ENCODE measurements at regions of chr11 and their contacts with region 1.

Region 1: GRCh38 chr11:47233989-47234668 is 14.5 kb downstream of the ACP2 start:
- DNase-seq: peak; percentile 63 to 72 (median 70)
- H3K4me3 ChIP-seq: peak overlapping the region in 1 of 7 experiments; percentile 4
- H3K27ac ChIP-seq: no peak overlapping the region
- H3K4me1 ChIP-seq: peaks cover 0 to 15% (median 7%) of the 10 kb centered on the region in 4 experiments
- H3K27me3 ChIP-seq: no peaks in the 10 kb centered on the region

Region 2: DNA sequence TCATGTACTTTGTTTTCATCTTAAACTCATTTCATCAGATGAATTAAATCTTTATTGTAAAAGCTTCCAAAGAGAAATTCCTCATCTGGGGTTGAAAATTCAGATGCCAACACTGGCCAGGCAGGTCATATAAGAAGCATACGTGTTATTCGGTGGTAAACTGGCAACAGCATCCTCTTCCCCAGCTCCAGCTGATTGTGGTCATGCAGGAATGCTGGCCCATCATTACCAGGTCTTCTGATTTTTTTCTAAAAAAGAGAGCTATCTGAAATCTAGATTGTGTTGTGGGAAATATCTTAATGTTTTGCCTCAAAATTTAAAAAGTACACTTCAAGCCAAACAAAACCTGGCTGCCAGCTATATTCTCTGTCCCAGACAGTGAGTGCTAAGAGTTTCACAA is 111.0 kb before region 1 on chr11:
- CTCF ChIA-PET with region 1: no interaction called
- POLR2A ChIA-PET with region 1: no interaction called
- DNase-seq: no peak
- H3K4me3 ChIP-seq: no peak overlapping the region
- H3K27ac ChIP-seq: no peak overlapping the region
- H3K4me1 ChIP-seq: no peaks in the 10 kb centered on the region
- H3K27me3 ChIP-seq: no peaks in the 10 kb centered on the region

Region 3: DNA sequence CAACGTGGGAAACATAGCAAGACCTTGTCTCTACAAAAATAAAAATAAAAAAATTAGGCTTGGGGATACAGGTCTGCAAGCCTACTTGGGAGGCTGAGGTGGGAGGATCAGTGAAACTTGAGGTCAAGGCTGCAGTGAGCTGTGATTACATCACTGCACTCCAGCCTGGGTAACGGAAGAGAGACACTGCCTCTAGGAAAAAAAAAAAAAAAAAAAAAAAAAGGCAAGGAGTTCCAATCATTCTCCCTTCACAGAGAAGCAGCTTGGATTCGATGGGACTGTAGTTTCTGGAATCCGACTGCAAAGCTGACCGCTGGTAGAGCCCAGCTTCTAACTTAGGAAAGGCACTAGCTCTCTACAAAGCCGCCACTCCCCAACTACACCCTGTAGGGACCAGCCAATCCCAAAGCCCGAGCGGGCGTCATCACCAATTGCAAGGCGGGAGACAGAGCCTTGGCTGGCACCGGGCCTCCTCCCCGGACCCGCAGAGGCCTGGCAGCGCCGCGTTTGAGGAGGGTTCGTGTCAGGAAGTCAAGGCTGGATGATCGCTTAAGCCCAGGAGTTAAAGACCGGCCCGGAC is 20.1 kb before region 1 on chr11:
- CTCF ChIA-PET with region 1: interaction called, 41 read pairs
- POLR2A ChIA-PET with region 1: interaction called, 3 read pairs
- DNase-seq: peak; percentile 90 to 93 (median 91)
- H3K4me3 ChIP-seq: peak overlapping the region; percentile 70 to 95 (median 81)
- H3K27ac ChIP-seq: peak overlapping the region; percentile 79 to 87
- H3K4me1 ChIP-seq: peaks cover 10 to 27% (median 23%) of the 10 kb centered on the region in 4 experiments
- H3K27me3 ChIP-seq: no peaks in the 10 kb centered on the region

Region 4: GRCh38 chr11:47248664-47249377 is 14.7 kb after region 1 on chr11 and contains the start of gene ACP2:
- CTCF ChIA-PET with region 1: interaction called, 62 read pairs
- POLR2A ChIA-PET with region 1: interaction called, 6 read pairs
- DNase-seq: peak; percentile 92 to 95 (median 93)
- H3K4me3 ChIP-seq: peak within 1 kb of the TSS; percentile 75 to 99 (median 94)
- H3K27ac ChIP-seq: peak within 1 kb of the TSS; percentile 94 to 97
- H3K4me1 ChIP-seq: peaks cover 11 to 21% (median 17%) of the 10 kb centered on the region in 4 experiments
- H3K27me3 ChIP-seq: no peaks in the 10 kb centered on the region

Region 5: GRCh38 chr11:47259178-47259977 is 25.2 kb after region 1 on chr11:
- CTCF ChIA-PET with region 1: interaction called, 64 read pairs
- POLR2A ChIA-PET with region 1: interaction called, 14 read pairs
- DNase-seq: peak; percentile 64 to 94 (median 91)
- H3K4me3 ChIP-seq: peak overlapping the region in 5 of 7 experiments; percentile 16 to 77 (median 56)
- H3K27ac ChIP-seq: peak overlapping the region in 1 of 2 experiments; percentile 75
- H3K4me1 ChIP-seq: peaks cover 14 to 69% (median 57%) of the 10 kb centered on the region in 4 experiments
- H3K27me3 ChIP-seq: no peaks in the 10 kb centered on the region

Region 6: GRCh38 chr11:47269002-47269828 is 35.1 kb after region 1 on chr11:
- CTCF ChIA-PET with region 1: interaction called, 29 read pairs
- POLR2A ChIA-PET with region 1: interaction called, 6 read pairs
- DNase-seq: peak; percentile 90 to 96 (median 95)
- H3K4me3 ChIP-seq: peak overlapping the region; percentile 65 to 88 (median 79)
- H3K27ac ChIP-seq: peak overlapping the region; percentile 93 to 95
- H3K4me1 ChIP-seq: peaks cover 32 to 73% (median 71%) of the 10 kb centered on the region in 4 experiments
- H3K27me3 ChIP-seq: no peaks in the 10 kb centered on the region

Region 7: GRCh38 chr11:47274495-47275230 is 40.5 kb after region 1 on chr11:
- CTCF ChIA-PET with region 1: interaction called, 13 read pairs
- POLR2A ChIA-PET with region 1: interaction called, 6 read pairs
- DNase-seq: no peak
- H3K4me3 ChIP-seq: no peak overlapping the region
- H3K27ac ChIP-seq: no peak overlapping the region
- H3K4me1 ChIP-seq: peaks cover 18 to 30% (median 26%) of the 10 kb centered on the region in 4 experiments
- H3K27me3 ChIP-seq: no peaks in the 10 kb centered on the region